Gastrocnemius medialis (tissue), 4 donors: ENCODE measurements at regions of chr1 and their contacts with region 1.

Region 1: GRCh38 chr1:88867743-88868521 is 23.4 kb downstream of the GTF2B start:
- DNase-seq: no peak
- ATAC-seq: no peak
- H3K4me3 ChIP-seq: no peak overlapping the region
- H3K27ac ChIP-seq: no peak overlapping the region
- H3K4me1 ChIP-seq: peaks cover 5 to 18% of the 10 kb centered on the region in 2 donors
- H3K27me3 ChIP-seq: no peaks in the 10 kb centered on the region
- CTCF ChIP-seq: no peak
- POLR2A ChIP-seq: no peak

Region 2: DNA sequence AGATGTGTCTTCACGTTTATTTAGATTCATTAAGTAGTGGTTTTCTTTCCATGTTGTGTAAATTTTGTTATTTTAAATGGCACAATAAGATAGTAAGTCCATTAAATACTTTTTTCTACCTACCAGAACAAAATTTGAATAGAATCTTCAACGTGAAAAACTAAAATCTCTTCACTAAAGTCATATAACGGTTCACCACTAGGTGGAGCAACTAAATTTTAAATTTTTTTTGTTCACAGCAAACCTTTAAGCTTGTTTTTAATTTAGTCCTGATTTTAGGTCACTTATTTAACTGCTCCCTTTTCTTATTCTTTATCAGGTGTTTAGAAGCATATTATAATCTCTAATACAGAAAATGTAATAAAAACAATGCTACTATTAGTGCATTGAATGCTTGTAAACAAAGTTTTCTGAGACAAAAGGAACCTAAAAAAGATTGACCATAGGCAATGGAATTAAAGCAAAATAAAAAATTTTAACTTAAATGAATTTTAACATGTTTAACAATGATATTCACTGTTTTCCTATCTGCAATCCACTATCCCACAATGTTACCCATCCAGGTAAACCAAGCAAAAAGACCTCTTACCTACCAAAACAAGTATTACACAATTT is 212.1 kb before region 1 on chr1:
- in situ Hi-C with region 1: loop called (anchors 10 to 25 kb)
- intact Hi-C with region 1: no loop called
- DNase-seq: no peak
- ATAC-seq: no peak
- H3K4me3 ChIP-seq: no peak overlapping the region
- H3K27ac ChIP-seq: no peak overlapping the region
- H3K4me1 ChIP-seq: no peaks in the 10 kb centered on the region
- H3K27me3 ChIP-seq: no peaks in the 10 kb centered on the region
- CTCF ChIP-seq: peak; percentile 30 to 69 (median 61)
- POLR2A ChIP-seq: no peak